ENCODE measurements at regions of chr4 and their contacts with region 1.

Region 1: GRCh38 chr4:52721968-52722815 is 29.0 kb downstream of the ERVMER34-1 start:
- H3K4me3 Mint-ChIP-seq: peak overlapping the region; percentile 77
- H3K27ac Mint-ChIP-seq: peak overlapping the region; percentile 82
- H3K4me1 Mint-ChIP-seq: peaks cover 9% of the 10 kb centered on the region
- H3K27me3 Mint-ChIP-seq: peaks cover 2% of the 10 kb centered on the region

Region 2: DNA sequence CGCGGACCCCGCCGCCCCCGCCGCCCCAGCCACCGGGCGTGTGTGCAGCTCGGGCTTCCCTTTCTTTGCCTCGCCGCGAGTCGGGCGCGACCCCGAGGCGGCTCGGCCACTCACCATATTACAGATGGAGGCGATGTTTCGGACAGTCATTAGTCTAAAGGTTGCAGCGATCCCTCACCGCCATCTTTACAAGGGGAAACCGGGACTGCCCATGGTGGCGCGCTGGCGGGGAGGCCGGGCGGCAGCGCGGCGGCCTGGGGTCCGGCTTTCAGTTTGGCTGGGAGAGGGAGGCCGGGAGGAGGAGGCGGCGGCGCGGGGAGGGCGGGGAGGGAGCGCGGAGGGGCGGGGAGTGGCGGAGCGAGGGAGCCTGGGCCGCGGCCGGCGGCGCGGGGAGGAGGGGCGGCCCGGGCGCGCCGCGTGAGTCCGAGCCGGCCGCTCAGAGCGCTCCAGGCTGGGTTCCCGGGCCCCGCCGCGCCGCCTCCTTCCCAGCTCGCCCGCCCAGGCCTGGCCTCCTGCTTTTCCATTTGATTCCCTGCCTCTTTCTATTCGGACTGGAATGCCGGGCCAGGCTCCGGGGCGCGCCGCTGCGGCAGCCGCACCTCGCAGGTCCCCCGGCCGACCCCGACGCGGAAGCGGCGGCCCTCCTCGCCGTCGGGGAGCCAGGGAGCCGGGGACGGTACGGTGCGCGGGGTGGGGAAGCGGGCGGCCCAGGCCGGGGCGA is 63.0 kb before region 1 on chr4 and contains the start of gene USP46:
- intact Hi-C with region 1: loop called (anchors 5 kb)
- H3K4me3 Mint-ChIP-seq: peak within 1 kb of the TSS; percentile 83
- H3K27ac Mint-ChIP-seq: peak within 1 kb of the TSS; percentile 80
- H3K4me1 Mint-ChIP-seq: peaks cover 49% of the 10 kb centered on the region
- H3K27me3 Mint-ChIP-seq: peaks cover 6% of the 10 kb centered on the region

Region 3: GRCh38 chr4:52841682-52842456 is 119.7 kb after region 1 on chr4:
- intact Hi-C with region 1: loop called (anchors 5 kb)
- H3K4me3 Mint-ChIP-seq: no peak overlapping the region
- H3K27ac Mint-ChIP-seq: no peak overlapping the region
- H3K4me1 Mint-ChIP-seq: peaks cover 13% of the 10 kb centered on the region
- H3K27me3 Mint-ChIP-seq: peaks cover 2% of the 10 kb centered on the region